ENCODE measurements at regions of chrX and their contacts with region 1.

Region 1: DNA sequence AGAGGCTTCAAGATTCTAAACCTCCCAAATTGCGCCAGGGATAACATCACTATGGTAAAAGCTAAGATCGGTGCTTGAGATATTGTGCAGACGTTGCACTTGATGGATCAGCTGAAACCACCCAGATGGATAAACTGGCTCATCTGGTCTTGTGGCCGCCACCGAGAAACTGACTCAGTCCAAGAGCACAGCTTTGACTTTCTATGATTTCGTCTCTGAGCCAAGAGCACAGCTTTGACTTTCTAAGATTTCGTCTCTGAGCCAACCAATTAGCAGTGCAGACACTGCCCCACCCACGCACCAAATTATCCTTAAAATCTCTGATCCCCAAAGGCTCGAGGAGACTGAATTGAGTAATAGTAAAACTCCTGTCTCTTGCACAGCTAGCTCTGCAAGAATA is 687.2 kb downstream of the FAM133A start:
- DNase-seq: no peak
- ATAC-seq: no peak
- H3K4me3 Mint-ChIP-seq: no peak overlapping the region
- H3K27ac Mint-ChIP-seq: no peak overlapping the region
- H3K4me1 Mint-ChIP-seq: no peaks in the 10 kb centered on the region
- H3K27me3 Mint-ChIP-seq: no peaks in the 10 kb centered on the region
- CTCF ChIP-seq: no peak

Region 2: DNA sequence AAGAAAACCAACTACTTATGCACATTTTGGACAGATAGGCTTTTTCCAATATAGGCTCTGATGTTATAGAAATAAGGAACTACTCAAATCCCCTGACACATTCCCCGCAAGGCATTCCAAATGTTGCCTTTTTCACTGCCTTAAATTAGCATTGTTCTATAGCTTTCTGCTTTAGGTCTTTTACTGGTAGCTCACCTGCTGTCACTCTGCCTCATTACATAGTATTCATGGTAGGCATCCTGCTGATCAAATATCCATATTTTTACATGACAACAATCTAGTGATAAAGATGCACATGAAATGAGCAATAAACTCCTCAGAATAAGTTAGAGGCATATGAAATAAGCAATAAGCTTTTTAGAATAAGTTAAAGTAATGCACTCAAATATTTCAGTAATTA is 144.5 kb before region 1 on chrX:
- CTCF ChIA-PET with region 1: no interaction called
- POLR2A ChIA-PET with region 1: no interaction called
- intact Hi-C with region 1: no loop called
- DNase-seq: no peak
- ATAC-seq: no peak
- H3K4me3 Mint-ChIP-seq: no peak overlapping the region
- H3K27ac Mint-ChIP-seq: no peak overlapping the region
- H3K4me1 Mint-ChIP-seq: no peaks in the 10 kb centered on the region
- H3K27me3 Mint-ChIP-seq: no peaks in the 10 kb centered on the region
- CTCF ChIP-seq: no peak

Region 3: DNA sequence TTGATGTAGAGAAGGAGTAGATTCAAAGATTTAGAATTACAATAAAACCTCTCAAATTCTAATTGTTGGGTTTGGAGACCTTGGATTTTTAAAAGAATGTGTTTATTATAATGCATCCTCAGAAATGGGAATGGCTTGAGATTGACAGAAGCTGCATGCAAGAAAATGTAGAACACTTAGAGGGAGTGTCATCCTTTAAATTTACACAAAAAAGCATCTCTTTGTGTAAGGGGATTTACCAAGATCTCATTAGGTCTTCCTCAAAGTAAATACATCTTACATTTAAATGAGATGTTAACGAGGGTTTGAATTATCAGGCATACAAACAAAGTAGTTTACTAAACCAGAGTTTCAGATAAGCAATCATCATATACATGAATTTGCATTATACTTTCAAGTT is 72.3 kb before region 1 on chrX:
- CTCF ChIA-PET with region 1: no interaction called
- POLR2A ChIA-PET with region 1: no interaction called
- intact Hi-C with region 1: loop called (anchors 2 kb)
- DNase-seq: no peak
- ATAC-seq: no peak
- H3K4me3 Mint-ChIP-seq: no peak overlapping the region
- H3K27ac Mint-ChIP-seq: no peak overlapping the region
- H3K4me1 Mint-ChIP-seq: no peaks in the 10 kb centered on the region
- H3K27me3 Mint-ChIP-seq: no peaks in the 10 kb centered on the region
- CTCF ChIP-seq: no peak